Ascending aorta (tissue), 2 donors: ENCODE measurements at regions of chr17 and their contacts with region 1.

Region 1: GRCh38 chr17:5031365-5032082 is 3.7 kb downstream of the SLC52A1 start:
- DNase-seq: peak in 1 of 2 donors; percentile 85
- H3K4me3 ChIP-seq: peak overlapping the region; percentile 55 to 66
- H3K27ac ChIP-seq: peak overlapping the region in 1 of 2 donors; percentile 28
- H3K4me1 ChIP-seq: peaks cover 0 to 4% of the 10 kb centered on the region in 2 donors
- H3K27me3 ChIP-seq: no peaks in the 10 kb centered on the region
- CTCF ChIP-seq: peak; percentile 66 to 85 (median 81)

Region 2: GRCh38 chr17:5003214-5003867 is 28.2 kb before region 1 on chr17:
- intact Hi-C with region 1: no loop called
- DNase-seq: no peak
- H3K4me3 ChIP-seq: no peak overlapping the region
- H3K27ac ChIP-seq: no peak overlapping the region
- H3K4me1 ChIP-seq: peaks cover 6 to 17% of the 10 kb centered on the region in 2 donors
- H3K27me3 ChIP-seq: no peaks in the 10 kb centered on the region
- CTCF ChIP-seq: no peak

Region 3: GRCh38 chr17:5055543-5055942 is 24.0 kb after region 1 on chr17:
- intact Hi-C with region 1: loop called (anchors 2 kb)
- DNase-seq: no peak
- H3K4me3 ChIP-seq: no peak overlapping the region
- H3K27ac ChIP-seq: no peak overlapping the region
- H3K4me1 ChIP-seq: no peaks in the 10 kb centered on the region
- H3K27me3 ChIP-seq: no peaks in the 10 kb centered on the region
- CTCF ChIP-seq: no peak